Activated CD8-positive, alpha-beta memory T cell treated with anti-CD3 and anti-CD28 coated beads, Interleukin-2, amount 10 ng/mL, durations not matched to agents 7 days and 5 days (primary cell): ENCODE measurements at regions of chr7 and their contacts with region 1.

Region 1: GRCh38 chr7:23696916-23697441 is 13.0 kb upstream of the STK31 start:
- DNase-seq: peak; percentile 66
- ATAC-seq: peak; percentile 71
- H3K4me3 Mint-ChIP-seq: no peak overlapping the region
- H3K27ac Mint-ChIP-seq: no peak overlapping the region
- H3K4me1 Mint-ChIP-seq: peaks cover 3% of the 10 kb centered on the region
- H3K27me3 Mint-ChIP-seq: no peaks in the 10 kb centered on the region

Region 2: DNA sequence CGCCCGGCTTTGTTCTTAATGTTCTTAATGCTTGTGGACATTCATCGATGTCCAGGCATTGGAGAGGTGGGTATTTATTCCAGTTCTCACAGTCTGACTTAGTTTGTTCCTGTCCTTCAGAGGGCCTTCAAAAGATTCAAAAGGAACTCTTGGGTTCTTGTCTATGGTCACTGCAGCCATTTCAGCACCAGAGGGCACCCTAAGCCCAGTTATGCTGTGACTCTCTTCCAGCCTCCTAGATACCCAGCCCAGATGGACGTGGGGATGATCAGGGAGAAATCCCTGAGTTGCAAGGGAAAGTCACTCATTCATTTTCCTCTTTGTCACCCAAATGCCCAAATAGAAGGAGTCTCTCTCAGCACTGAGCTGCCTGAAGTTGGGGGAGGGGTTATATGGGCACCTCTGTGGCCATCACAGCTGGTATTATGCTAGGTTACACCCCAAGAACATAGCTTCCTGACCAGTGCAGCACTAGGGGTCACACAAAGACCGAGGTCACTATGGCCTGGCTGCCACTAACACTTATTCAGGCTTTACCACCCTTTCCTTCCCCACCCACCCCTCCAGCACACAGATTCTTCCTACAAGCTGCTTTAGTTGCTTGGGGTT is 126.3 kb before region 1 on chr7:
- CTCF ChIA-PET with region 1: interaction called, 10 read pairs
- DNase-seq: peak; percentile 74
- ATAC-seq: peak; percentile 81
- H3K4me3 Mint-ChIP-seq: no peak overlapping the region
- H3K27ac Mint-ChIP-seq: no peak overlapping the region
- H3K4me1 Mint-ChIP-seq: peaks cover 2% of the 10 kb centered on the region
- H3K27me3 Mint-ChIP-seq: peaks cover 21% of the 10 kb centered on the region

Region 3: DNA sequence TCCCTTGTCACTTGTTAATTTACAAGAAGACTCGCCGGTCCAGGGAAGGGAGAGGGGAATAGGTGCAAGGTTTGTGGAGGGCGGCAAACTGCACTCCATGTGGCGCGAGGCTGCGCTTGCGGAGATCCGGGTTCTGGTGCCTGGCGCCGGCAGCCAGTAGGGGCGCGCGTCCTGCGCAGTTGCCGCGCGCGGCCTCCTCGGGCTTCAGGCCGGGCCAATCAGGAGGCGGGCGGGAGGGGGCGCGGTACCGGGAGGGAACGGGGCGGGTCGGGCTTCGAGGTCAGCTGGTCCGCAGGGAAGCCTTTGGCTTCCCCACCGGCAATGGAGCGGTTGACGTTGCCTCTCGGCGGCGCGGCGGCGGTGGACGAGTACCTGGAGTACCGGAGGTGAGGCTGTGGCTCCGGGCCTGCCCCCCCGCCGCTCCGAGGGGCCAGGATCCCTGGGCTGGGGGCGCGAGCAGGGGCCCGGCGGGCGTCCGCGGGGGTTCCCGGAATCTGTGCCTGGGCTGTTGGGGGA is 17.0 kb before region 1 on chr7 and contains the start of gene FAM221A:
- CTCF ChIA-PET with region 1: interaction called, 11 read pairs
- DNase-seq: peak; percentile 87
- ATAC-seq: peak; percentile 100
- H3K4me3 Mint-ChIP-seq: peak within 1 kb of the TSS; percentile 76
- H3K27ac Mint-ChIP-seq: peak within 1 kb of the TSS; percentile 12
- H3K4me1 Mint-ChIP-seq: peaks cover 12% of the 10 kb centered on the region
- H3K27me3 Mint-ChIP-seq: peaks cover 8% of the 10 kb centered on the region
- total RNA-seq, gene FAM221A: 5.6 to 6.1 TPM

Region 4: GRCh38 chr7:23712368-23713284 is 15.6 kb after region 1 on chr7:
- CTCF ChIA-PET with region 1: interaction called, 13 read pairs
- DNase-seq: no peak
- ATAC-seq: no peak
- H3K4me3 Mint-ChIP-seq: no peak overlapping the region
- H3K27ac Mint-ChIP-seq: no peak overlapping the region
- H3K4me1 Mint-ChIP-seq: no peaks in the 10 kb centered on the region
- H3K27me3 Mint-ChIP-seq: no peaks in the 10 kb centered on the region